H1 (cell line): ENCODE measurements at regions of chr19 and their contacts with region 1.

Region 1: GRCh38 chr19:9070066-9070465 is 16.8 kb upstream of the OR1M1 start:
- DNase-seq: peak in 1 of 2 experiments; percentile 64
- H3K4me3 ChIP-seq: peak overlapping the region in 1 of 4 experiments; percentile 1; a peak in 2 of 8 replicates
- H3K27ac ChIP-seq: peak overlapping the region; percentile 6; the same call in 1 of the 2 replicates
- H3K4me1 ChIP-seq: peaks cover 1 to 14% (median 7%) of the 10 kb centered on the region in 4 experiments
- H3K27me3 ChIP-seq: no peaks in the 10 kb centered on the region
- CTCF ChIP-seq: no peak
- EP300 ChIP-seq: no peak
- POLR2A ChIP-seq: no peak
- RAD21 ChIP-seq: 0 out of 4 replicates have a peak, but pooled peaks of 1 of the 2 experiments have one; percentile 2

Region 2: GRCh38 chr19:9054207-9054606 is 15.9 kb before region 1 on chr19:
- CTCF ChIA-PET with region 1: interaction called, 5 read pairs
- POLR2A ChIA-PET with region 1: interaction called, 12 read pairs
- DNase-seq: no peak
- H3K4me3 ChIP-seq: peak overlapping the region in 1 of 4 experiments; percentile 37; a peak in 1 of 8 replicates
- H3K27ac ChIP-seq: no peak overlapping the region
- H3K4me1 ChIP-seq: peaks cover 4 to 16% (median 8%) of the 10 kb centered on the region in 4 experiments; a peak in 6 of 7 replicates
- H3K27me3 ChIP-seq: no peaks in the 10 kb centered on the region
- CTCF ChIP-seq: no peak
- EP300 ChIP-seq: no peak
- POLR2A ChIP-seq: no peak
- RAD21 ChIP-seq: no peak

Region 3: GRCh38 chr19:9086761-9087160 is 16.7 kb after region 1 on chr19 and contains the start of gene OR1M1:
- CTCF ChIA-PET with region 1: no interaction called
- POLR2A ChIA-PET with region 1: no interaction called
- DNase-seq: no peak
- H3K4me3 ChIP-seq: no peak within 1 kb of the TSS
- H3K27ac ChIP-seq: no peak within 1 kb of the TSS
- H3K4me1 ChIP-seq: no peaks in the 10 kb centered on the region
- H3K27me3 ChIP-seq: no peaks in the 10 kb centered on the region
- CTCF ChIP-seq: no peak
- EP300 ChIP-seq: no peak
- POLR2A ChIP-seq: no peak
- RAD21 ChIP-seq: no peak
- total RNA-seq, gene OR1M1: not detected in 2 replicates

Region 4: DNA sequence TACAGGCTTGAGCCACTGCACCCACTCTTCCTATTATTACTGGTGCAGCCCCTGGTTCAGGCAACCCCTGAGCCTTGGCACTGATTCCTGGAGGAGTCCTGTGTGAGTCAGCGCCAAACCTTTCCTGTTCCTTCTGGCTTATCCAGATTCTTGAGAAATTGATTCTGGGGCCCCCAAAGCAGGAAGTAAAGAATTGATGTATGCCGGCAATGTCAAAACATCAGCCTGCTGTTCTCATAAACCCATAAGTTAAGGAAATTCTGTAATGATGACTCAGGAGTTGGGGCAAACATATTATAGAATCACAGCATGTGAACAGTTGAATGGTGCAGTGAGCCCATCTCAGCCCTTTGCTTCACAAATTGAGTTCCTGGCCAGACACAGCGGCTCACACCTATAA is 58.1 kb after region 1 on chr19:
- CTCF ChIA-PET with region 1: no interaction called
- POLR2A ChIA-PET with region 1: no interaction called
- DNase-seq: no peak
- H3K4me3 ChIP-seq: no peak overlapping the region
- H3K27ac ChIP-seq: no peak overlapping the region
- H3K4me1 ChIP-seq: no peaks in the 10 kb centered on the region
- H3K27me3 ChIP-seq: no peaks in the 10 kb centered on the region
- CTCF ChIP-seq: no peak
- EP300 ChIP-seq: no peak
- POLR2A ChIP-seq: no peak
- RAD21 ChIP-seq: no peak